ENCODE measurements at regions of chr9 and their contacts with region 1.

Region 1: DNA sequence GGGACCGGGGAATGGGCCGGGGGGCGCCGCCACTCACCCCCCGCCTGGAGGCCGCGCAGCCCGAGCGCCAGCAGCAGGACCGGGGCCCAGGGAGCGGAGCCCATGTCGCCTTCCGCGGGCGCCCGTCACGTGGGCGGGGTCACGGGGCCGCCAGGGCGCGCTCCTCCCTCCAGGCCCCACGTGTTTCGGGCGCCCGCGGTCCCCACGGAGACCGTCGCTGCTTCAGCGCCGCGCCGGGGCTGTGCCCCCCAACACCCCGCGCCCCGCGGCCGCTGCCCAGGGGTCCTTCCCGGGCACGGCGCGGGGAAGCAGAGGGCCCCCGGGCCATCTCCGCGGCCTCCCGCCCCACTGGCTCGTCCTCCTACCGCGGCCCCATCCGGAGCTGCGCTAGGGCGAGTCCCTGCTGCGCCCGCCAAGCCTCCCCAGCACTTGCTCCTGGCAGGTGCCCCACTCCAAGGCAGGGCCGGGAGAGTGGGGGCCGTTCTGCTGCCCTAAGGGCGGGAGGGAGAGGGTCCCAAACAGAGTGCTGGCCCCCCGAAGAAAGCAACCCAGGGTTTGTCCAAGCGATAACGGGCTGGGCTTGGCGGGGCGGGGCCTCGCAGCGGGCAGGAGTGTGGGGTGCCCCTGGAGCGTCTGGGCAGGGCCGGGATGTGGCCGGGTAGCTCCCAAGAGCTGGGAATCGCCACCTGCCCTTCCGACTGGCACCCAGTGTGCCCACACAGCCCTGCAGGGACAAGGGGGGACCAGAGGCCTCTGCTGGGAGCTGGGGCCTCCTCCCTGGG is at the start of gene DPP7:
- DNase-seq: peak; percentile 67 to 87 (median 78)
- ATAC-seq: peak; percentile 94
- H3K4me3 Mint-ChIP-seq: peak within 1 kb of the TSS; percentile 45 to 79 (median 73)
- H3K27ac Mint-ChIP-seq: peak within 1 kb of the TSS in 6 of 10 donors; percentile 15 to 80 (median 62)
- H3K4me1 Mint-ChIP-seq: peaks cover 0 to 18% (median 5%) of the 10 kb centered on the region in 4 donors
- H3K27me3 Mint-ChIP-seq: no peaks in the 10 kb centered on the region
- polyA plus RNA-seq, gene DPP7: 98.7 to 126 (median 121) TPM

Region 2: DNA sequence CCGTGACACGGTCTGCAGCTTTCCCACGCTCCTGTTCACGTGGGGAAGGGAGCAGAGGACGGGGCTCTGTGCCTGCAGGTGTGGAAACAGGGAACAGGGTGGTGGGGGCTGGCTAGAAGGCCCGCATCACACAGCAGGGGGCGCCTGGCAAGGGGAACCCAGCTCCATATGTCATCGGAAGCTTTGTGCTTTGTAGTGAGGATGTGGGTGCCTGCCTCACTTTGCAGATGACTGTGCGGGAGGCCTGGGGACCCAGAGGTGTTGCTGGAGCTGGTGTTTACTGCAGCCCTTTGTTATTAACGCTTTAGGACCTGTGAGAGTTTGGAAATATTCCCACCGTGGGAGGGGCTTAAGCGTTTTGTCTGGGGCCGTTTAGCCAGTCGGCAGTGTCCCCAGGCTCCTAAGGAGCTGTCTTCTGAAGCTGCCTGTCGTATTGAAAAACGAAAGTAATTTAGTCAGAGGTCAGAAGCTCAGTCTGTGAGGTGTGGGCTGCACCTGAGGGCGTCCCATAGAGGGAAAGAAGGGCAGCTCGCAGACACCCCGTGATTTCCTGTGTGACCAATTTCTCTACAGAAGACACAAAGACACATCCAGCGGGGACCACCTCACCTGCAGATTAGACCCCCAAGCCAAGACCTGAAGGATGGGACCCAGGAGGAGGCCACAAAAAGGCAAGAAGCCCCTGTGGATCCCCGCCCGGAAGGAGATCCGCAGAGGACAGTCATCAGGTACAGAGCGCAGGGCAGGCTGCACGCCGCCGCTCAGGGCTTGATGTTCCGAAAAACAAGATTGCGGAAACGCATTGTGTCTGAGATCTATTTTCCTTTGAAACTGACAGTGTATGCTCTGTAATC is 18.9 kb before region 1 on chr9:
- POLR2A ChIA-PET with region 1: interaction called, 20 read pairs
- DNase-seq: peak; percentile 77 to 93 (median 88)
- ATAC-seq: peak; percentile 99
- H3K4me3 Mint-ChIP-seq: peak overlapping the region; percentile 81 to 90 (median 87)
- H3K27ac Mint-ChIP-seq: peak overlapping the region; percentile 91 to 97 (median 97)
- H3K4me1 Mint-ChIP-seq: peaks cover 7 to 21% (median 17%) of the 10 kb centered on the region in 4 donors
- H3K27me3 Mint-ChIP-seq: no peaks in the 10 kb centered on the region

Region 3: GRCh38 chr9:137129456-137130175 is 14.8 kb after region 1 on chr9:
- POLR2A ChIA-PET with region 1: interaction called, 14 read pairs
- DNase-seq: peak; percentile 82 to 93 (median 88)
- ATAC-seq: peak; percentile 92 to 95
- H3K4me3 Mint-ChIP-seq: peak overlapping the region; percentile 78 to 95 (median 88)
- H3K27ac Mint-ChIP-seq: peak overlapping the region; percentile 71 to 94 (median 84)
- H3K4me1 Mint-ChIP-seq: peaks cover 17 to 30% (median 28%) of the 10 kb centered on the region in 4 donors
- H3K27me3 Mint-ChIP-seq: peaks cover 0 to 10% (median 2%) of the 10 kb centered on the region in 5 donors

Region 4: GRCh38 chr9:137140151-137141012 is 25.6 kb after region 1 on chr9:
- POLR2A ChIA-PET with region 1: no interaction called
- DNase-seq: no peak
- ATAC-seq: no peak
- H3K4me3 Mint-ChIP-seq: peak overlapping the region in 3 of 10 donors; percentile 2 to 41 (median 28)
- H3K27ac Mint-ChIP-seq: peak overlapping the region in 1 of 10 donors; percentile 53
- H3K4me1 Mint-ChIP-seq: peaks cover 0 to 4% (median 2%) of the 10 kb centered on the region in 4 donors
- H3K27me3 Mint-ChIP-seq: peaks cover 19 to 81% (median 46%) of the 10 kb centered on the region in 5 donors

Measured in naive thymus-derived CD8-positive, alpha-beta T cell (primary cell).